Ovary (tissue), 10 donors: ENCODE measurements at regions of chr12 and their contacts with region 1.

Region 1: GRCh38 chr12:54134850-54135249 is 53.9 kb downstream of the SMUG1 start:
- DNase-seq: no peak
- H3K4me3 ChIP-seq: no peak overlapping the region
- H3K27ac ChIP-seq: no peak overlapping the region
- H3K4me1 ChIP-seq: no peaks in the 10 kb centered on the region
- H3K27me3 ChIP-seq: no peaks in the 10 kb centered on the region
- CTCF ChIP-seq: no peak
- EP300 ChIP-seq: no peak
- POLR2A ChIP-seq: no peak

Region 2: DNA sequence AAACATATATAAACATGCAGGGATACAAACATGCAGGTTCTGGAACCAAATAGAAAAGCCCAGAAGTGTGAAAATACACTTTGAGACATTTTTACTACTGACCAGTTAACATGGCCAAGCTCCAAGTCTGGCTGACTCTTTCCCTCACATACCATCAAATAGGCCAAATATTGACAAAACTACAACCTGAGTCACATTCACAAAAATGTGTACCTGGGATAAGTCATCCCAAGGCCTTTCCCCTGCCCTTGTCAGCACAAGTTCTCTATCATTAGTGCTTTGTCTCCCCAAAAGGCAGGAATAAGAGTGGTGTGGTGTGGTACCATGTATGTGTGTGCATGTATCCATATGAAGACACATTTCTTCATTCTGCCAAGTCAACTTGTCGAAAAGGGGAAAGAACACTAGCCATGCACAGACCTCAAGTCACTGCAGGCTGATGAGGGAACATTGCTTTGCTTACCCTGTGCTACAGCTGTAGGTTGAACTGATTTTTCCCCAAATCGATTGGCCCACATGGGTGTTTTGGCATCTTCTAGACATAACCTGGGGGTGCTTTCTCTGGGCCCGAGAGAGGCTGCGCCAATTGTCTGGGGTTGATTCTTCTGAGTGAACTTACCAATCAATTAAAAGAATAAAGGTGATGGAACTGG is 66.3 kb before region 1 on chr12:
- intact Hi-C with region 1: no loop called
- DNase-seq: no peak
- H3K4me3 ChIP-seq: no peak overlapping the region
- H3K27ac ChIP-seq: no peak overlapping the region
- H3K4me1 ChIP-seq: no peaks in the 10 kb centered on the region
- H3K27me3 ChIP-seq: no peaks in the 10 kb centered on the region
- CTCF ChIP-seq: no peak
- EP300 ChIP-seq: no peak
- POLR2A ChIP-seq: no peak

Region 3: DNA sequence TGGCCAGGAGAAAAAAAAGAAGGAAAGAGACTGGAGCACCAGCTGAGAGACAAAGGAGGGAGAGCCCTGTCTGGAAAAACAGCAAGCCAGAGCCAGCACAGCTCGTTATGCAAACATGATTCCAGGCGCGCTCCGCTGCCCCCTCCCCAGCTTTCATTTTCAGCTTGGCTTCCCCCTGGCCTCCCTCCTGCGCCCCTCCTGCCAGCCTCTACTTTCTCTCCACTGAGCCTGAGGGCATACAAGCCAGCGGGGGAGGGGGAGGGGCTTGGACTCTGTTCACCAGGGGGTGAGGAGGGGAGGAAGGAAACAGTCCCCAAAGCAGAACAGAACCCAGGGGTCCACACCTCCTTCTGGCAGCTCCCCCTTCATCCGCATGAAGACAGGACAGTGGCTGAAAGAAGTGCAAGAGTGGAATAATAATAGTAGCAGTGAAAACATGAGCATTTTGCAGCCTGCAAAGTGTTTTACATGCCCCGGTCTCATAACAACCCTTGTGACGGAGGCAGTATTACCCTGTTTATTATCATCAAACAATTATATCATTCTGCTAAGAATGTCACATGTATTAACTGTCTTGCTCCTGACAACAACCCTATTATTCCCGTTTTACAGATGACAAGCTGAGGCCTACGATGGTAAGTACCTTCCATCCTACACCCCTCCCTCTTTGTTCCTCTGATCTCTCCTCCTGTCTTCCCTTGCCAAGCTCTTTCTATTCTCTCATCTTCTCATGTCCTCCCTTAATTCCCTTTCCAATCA is 29.7 kb after region 1 on chr12:
- intact Hi-C with region 1: loop called in 1 of 4 experiments (anchors 2 kb)
- DNase-seq: no peak
- H3K4me3 ChIP-seq: no peak overlapping the region
- H3K27ac ChIP-seq: no peak overlapping the region
- H3K4me1 ChIP-seq: peaks cover 10% of the 10 kb centered on the region
- H3K27me3 ChIP-seq: no peaks in the 10 kb centered on the region
- CTCF ChIP-seq: no peak
- EP300 ChIP-seq: no peak
- POLR2A ChIP-seq: no peak

Region 4: GRCh38 chr12:54191550-54192022 is 56.7 kb after region 1 on chr12:
- intact Hi-C with region 1: loop called in 1 of 4 experiments (anchors 5 kb)
- DNase-seq: peak; percentile 82 to 88 (median 88)
- H3K4me3 ChIP-seq: no peak overlapping the region
- H3K27ac ChIP-seq: no peak overlapping the region
- H3K4me1 ChIP-seq: no peaks in the 10 kb centered on the region
- H3K27me3 ChIP-seq: no peaks in the 10 kb centered on the region
- CTCF ChIP-seq: peak; percentile 75 to 85 (median 82)
- EP300 ChIP-seq: no peak
- POLR2A ChIP-seq: no peak

Region 5: GRCh38 chr12:54678131-54678530 is 543.3 kb after region 1 on chr12:
- intact Hi-C with region 1: loop called in 1 of 4 experiments (anchors 5 kb)
- DNase-seq: no peak
- H3K4me3 ChIP-seq: no peak overlapping the region
- H3K27ac ChIP-seq: no peak overlapping the region
- H3K4me1 ChIP-seq: no peaks in the 10 kb centered on the region
- H3K27me3 ChIP-seq: no peaks in the 10 kb centered on the region
- CTCF ChIP-seq: no peak
- EP300 ChIP-seq: no peak
- POLR2A ChIP-seq: no peak